ENCODE measurements at regions of chr11 and their contacts with region 1.

Region 1: DNA sequence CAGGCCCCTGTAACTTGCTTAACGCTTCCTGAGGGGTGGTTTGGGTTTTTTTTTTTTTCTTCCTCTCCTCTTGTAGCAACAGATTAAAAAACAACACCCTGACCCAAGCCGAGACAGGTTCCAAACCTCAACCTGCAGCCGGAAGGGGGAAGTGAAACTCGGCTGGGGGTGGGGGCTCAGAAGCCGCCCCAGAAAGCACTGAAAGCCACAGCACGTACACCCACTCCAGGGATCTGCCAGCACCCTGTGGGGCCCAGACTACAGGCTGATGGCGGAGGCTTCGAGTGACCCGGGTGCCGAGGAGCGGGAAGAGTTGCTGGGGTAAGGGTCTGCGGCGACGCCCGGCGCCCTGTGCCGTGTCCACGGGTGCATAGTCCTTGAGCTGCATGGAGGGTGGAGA is at the start of gene LSP1:
- DNase-seq: peak; percentile 92
- H3K4me3 Mint-ChIP-seq: peak within 1 kb of the TSS; percentile 97
- H3K27ac Mint-ChIP-seq: peak within 1 kb of the TSS; percentile 97
- H3K4me1 Mint-ChIP-seq: peaks cover 63% of the 10 kb centered on the region
- H3K27me3 Mint-ChIP-seq: peaks cover 2% of the 10 kb centered on the region
- total RNA-seq, gene LSP1: 590 TPM

Region 2: GRCh38 chr11:1832211-1832919 is 20.5 kb before region 1 on chr11:
- CTCF ChIA-PET with region 1: interaction called, 14 read pairs
- POLR2A ChIA-PET with region 1: no interaction called
- DNase-seq: peak; percentile 65
- H3K4me3 Mint-ChIP-seq: no peak overlapping the region
- H3K27ac Mint-ChIP-seq: no peak overlapping the region
- H3K4me1 Mint-ChIP-seq: no peaks in the 10 kb centered on the region
- H3K27me3 Mint-ChIP-seq: peaks cover 5% of the 10 kb centered on the region

Region 3: DNA sequence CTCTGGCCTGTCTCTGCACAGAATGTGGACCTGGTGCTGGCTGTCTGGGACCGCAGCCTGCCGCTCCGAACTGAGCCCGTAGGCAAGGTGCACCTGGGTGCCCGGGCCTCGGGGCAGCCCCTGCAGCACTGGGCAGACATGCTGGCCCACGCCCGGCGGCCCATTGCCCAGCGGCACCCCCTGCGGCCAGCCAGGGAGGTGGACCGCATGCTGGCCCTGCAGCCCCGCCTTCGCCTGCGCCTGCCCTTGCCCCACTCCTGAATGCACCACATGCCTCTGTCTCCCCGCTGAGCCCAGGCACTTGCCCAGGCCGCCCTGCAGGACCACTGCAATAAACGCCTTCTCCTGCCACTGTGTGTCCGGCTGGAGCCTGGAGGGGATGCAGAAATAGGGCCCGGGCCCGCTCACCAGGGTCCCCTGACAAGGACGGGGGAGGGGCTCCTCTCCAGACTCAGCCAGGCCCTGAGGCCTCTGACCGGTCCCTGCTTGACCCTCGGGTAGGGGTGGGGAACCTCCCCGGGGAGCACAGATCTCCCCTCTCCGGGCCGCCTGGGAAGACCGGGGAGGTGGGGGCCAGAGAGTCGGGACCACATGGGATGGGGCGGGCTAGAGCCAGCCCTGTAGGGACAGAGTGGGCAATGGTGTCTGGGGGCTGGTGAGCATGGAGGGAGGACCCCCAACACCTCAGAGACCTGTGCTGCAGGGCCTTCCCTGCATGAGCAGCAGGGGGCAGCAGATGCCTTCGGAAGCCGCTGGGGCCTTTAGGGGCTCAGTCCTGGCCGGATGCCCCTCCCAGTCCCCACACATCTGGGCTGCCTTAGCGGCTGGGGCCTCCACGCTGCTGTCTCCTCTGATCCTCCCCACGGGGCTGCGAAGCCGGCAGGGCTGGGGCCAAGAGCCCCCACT is 15.5 kb before region 1 on chr11:
- CTCF ChIA-PET with region 1: interaction called, 14 read pairs
- POLR2A ChIA-PET with region 1: interaction called, 21 read pairs
- DNase-seq: peak; percentile 85
- H3K4me3 Mint-ChIP-seq: no peak overlapping the region
- H3K27ac Mint-ChIP-seq: no peak overlapping the region
- H3K4me1 Mint-ChIP-seq: peaks cover 10% of the 10 kb centered on the region
- H3K27me3 Mint-ChIP-seq: peaks cover 3% of the 10 kb centered on the region

Region 4: GRCh38 chr11:1882519-1883238 is 29.8 kb after region 1 on chr11:
- CTCF ChIA-PET with region 1: interaction called, 39 read pairs
- POLR2A ChIA-PET with region 1: interaction called, 67 read pairs
- DNase-seq: peak; percentile 75
- H3K4me3 Mint-ChIP-seq: no peak overlapping the region
- H3K27ac Mint-ChIP-seq: no peak overlapping the region
- H3K4me1 Mint-ChIP-seq: peaks cover 12% of the 10 kb centered on the region
- H3K27me3 Mint-ChIP-seq: no peaks in the 10 kb centered on the region

Region 5: GRCh38 chr11:1889224-1890120 is 36.6 kb after region 1 on chr11:
- CTCF ChIA-PET with region 1: interaction called, 4 read pairs
- POLR2A ChIA-PET with region 1: interaction called, 67 read pairs
- DNase-seq: peak; percentile 91
- H3K4me3 Mint-ChIP-seq: peak overlapping the region; percentile 55
- H3K27ac Mint-ChIP-seq: peak overlapping the region; percentile 94
- H3K4me1 Mint-ChIP-seq: peaks cover 43% of the 10 kb centered on the region
- H3K27me3 Mint-ChIP-seq: no peaks in the 10 kb centered on the region

Region 6: GRCh38 chr11:1946812-1947484 is 94.1 kb after region 1 on chr11 and contains the start of gene MRPL23:
- CTCF ChIA-PET with region 1: interaction called, 4 read pairs
- POLR2A ChIA-PET with region 1: interaction called, 10 read pairs
- DNase-seq: peak; percentile 18
- H3K4me3 Mint-ChIP-seq: no peak within 1 kb of the TSS
- H3K27ac Mint-ChIP-seq: no peak within 1 kb of the TSS
- H3K4me1 Mint-ChIP-seq: no peaks in the 10 kb centered on the region
- H3K27me3 Mint-ChIP-seq: no peaks in the 10 kb centered on the region
- total RNA-seq, gene MRPL23: 99.8 to 99.9 TPM

Measured in activated CD4-positive, alpha-beta memory T cell treated with anti-CD3 and anti-CD28 coated beads, Interleukin-2, amount 10 ng/mL, durations not matched to agents 7 days and 5 days (primary cell).